Vagina (tissue), 2 donors: ENCODE measurements at regions of chr6 and their contacts with region 1.

Region 1: GRCh38 chr6:28907394-28907793 is 16.4 kb downstream of the TRIM27 start:
- DNase-seq: no peak
- H3K4me3 ChIP-seq: no peak overlapping the region
- H3K27ac ChIP-seq: no peak overlapping the region
- H3K4me1 ChIP-seq: no peaks in the 10 kb centered on the region
- H3K27me3 ChIP-seq: no peaks in the 10 kb centered on the region
- CTCF ChIP-seq: no peak
- POLR2A ChIP-seq: no peak

Region 2: GRCh38 chr6:27864906-27865849 is 1042.2 kb before region 1 on chr6:
- intact Hi-C with region 1: no loop called
- DNase-seq: no peak
- H3K4me3 ChIP-seq: peak overlapping the region; percentile 55 to 62
- H3K27ac ChIP-seq: peak overlapping the region; percentile 68
- H3K4me1 ChIP-seq: peaks cover 41% of the 10 kb centered on the region
- H3K27me3 ChIP-seq: no peaks in the 10 kb centered on the region
- CTCF ChIP-seq: no peak
- POLR2A ChIP-seq: no peak

Region 3: DNA sequence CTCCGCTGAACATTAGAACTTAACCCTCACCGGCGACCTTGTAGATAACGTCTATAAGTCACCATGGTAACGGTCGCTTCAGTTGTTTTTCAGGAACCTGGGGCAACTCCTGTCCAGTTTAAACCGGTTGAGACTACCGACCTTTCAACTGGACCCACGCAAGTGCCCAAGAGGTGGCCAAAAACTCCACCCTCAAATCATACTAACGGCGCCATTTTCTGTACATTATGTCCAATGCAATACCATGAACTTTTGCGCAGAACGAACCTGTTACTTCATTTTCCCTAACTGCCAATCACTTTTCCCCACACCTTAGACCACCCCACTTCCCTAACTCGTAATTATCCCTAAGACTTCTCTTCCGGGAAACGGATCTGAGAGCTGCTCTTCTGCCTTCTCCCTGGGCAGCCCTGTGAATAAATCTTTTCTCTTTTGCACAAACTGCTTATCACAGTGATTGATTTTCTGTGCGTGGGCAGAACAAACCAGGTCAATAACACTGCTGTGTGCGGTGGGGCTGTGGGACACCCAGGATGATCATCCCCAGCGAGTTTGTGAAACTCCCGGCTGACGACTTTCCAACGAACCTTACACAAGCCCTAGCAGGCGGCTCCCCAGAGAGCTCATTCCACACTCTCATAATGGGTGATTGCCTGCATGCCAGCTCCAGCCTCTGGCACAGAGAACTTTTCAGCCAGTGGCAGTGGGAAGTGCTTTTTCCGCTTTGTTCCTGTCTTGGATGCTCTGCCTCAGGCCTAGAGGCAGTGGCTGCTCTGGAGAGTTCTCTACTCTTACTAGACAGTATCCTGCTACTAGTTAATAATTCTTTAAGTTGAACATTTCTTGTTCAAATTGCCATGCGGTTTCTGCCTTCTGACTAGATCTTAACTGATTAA is 353.2 kb before region 1 on chr6:
- intact Hi-C with region 1: no loop called
- DNase-seq: no peak
- H3K4me3 ChIP-seq: no peak overlapping the region
- H3K27ac ChIP-seq: no peak overlapping the region
- H3K4me1 ChIP-seq: no peaks in the 10 kb centered on the region
- H3K27me3 ChIP-seq: no peaks in the 10 kb centered on the region
- CTCF ChIP-seq: no peak
- POLR2A ChIP-seq: no peak

Region 4: GRCh38 chr6:28758046-28758817 is 149.2 kb before region 1 on chr6:
- intact Hi-C with region 1: no loop called
- DNase-seq: no peak
- H3K4me3 ChIP-seq: no peak overlapping the region
- H3K27ac ChIP-seq: no peak overlapping the region
- H3K4me1 ChIP-seq: no peaks in the 10 kb centered on the region
- H3K27me3 ChIP-seq: peaks cover 2% of the 10 kb centered on the region
- CTCF ChIP-seq: no peak
- POLR2A ChIP-seq: no peak

Region 5: DNA sequence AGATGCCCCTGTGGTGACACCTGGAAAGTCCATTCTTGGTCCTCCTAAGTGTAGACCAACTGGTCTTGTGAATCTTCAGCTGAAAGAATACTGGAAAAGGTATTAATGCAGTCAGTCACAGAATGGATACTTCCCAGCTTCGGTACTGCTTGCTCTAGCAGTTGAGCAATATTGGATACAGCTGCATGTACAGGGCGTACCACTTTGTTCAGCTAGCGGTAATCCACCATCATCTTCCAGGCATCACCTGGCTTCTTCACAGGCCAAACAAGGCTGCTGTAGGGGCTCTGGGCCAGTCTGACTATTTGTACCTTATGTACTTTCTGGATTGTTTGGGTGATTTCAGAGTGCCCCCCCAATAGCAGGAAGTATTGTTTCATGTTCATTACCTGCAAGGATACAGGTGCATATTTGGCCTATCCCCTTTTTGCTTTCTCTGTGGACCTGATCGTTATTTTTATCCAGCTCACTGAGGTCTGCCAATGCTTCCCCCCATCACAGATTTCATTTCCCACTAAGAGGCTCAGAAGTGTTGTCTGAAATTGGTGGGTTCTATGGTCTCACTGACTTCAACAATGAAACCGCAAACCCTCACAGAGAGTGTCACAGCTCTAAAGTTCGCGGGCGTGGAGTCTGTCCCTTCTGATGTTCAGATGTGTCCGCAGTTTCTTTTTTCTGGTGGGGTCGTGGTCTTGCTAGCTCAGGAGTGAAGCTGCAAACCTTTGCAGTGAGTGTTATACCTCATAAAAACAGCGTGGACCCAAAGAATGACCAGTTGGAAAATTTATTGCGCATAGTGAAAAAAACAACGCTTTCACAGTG is 35.8 kb before region 1 on chr6:
- intact Hi-C with region 1: loop called (anchors 1 kb)
- DNase-seq: no peak
- H3K4me3 ChIP-seq: no peak overlapping the region
- H3K27ac ChIP-seq: no peak overlapping the region
- H3K4me1 ChIP-seq: peaks cover 6% of the 10 kb centered on the region
- H3K27me3 ChIP-seq: no peaks in the 10 kb centered on the region
- CTCF ChIP-seq: no peak
- POLR2A ChIP-seq: no peak